ENCODE measurements at regions of chr4 and their contacts with region 1.

Region 1: DNA sequence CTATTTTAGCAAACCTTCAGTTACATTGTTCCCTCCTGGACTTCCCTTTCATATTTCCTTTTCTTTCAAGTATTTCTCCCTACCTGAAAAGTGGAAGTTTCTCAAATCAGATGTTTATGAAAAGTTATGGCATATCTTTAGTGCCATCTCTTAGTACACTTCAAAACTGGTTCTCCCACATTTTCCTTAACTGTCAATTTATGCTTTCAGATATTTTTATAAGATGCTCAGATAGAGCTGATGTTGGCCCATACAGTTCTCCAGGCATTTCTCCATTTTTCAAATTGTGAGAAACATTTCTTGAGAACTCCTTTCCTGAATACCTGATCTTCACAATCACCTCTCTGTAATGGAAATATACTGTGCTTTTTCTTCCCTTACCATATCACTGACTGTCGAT is 32.5 kb upstream of the AP1AR start:
- DNase-seq: no peak
- H3K4me3 Mint-ChIP-seq: no peak overlapping the region
- H3K27ac Mint-ChIP-seq: no peak overlapping the region
- H3K4me1 Mint-ChIP-seq: peaks cover 21% of the 10 kb centered on the region
- H3K27me3 Mint-ChIP-seq: peaks cover 10% of the 10 kb centered on the region

Region 2: GRCh38 chr4:112119353-112119783 is 79.7 kb before region 1 on chr4:
- CTCF ChIA-PET with region 1: interaction called, 5 read pairs
- intact Hi-C with region 1: loop called (anchors 1 kb)
- DNase-seq: peak; percentile 29
- H3K4me3 Mint-ChIP-seq: no peak overlapping the region
- H3K27ac Mint-ChIP-seq: peak overlapping the region; percentile 89
- H3K4me1 Mint-ChIP-seq: peaks cover 22% of the 10 kb centered on the region
- H3K27me3 Mint-ChIP-seq: no peaks in the 10 kb centered on the region

Region 3: DNA sequence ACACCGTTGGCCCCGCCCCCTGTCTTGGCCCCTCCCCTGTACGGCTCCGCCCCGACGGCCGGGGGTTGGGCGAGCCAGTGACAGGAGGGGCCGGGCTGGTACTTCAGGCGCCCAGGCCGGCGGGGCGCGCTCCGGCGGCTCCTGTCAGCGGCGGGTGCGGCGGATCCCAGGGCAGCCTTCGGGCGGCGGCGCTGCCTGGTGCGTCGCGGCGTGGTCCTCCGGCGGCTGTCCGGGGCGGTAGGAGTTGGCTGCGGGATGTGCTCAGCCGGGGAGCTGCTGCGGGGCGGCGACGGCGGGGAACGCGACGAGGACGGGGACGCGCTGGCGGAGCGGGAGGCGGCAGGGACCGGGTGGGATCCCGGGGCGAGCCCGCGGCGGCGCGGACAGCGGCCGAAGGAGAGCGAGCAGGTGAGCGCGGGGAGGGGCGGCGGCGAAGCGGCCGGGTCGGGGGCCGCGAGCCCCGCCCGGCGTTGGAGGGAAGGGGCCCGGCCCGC is 53.7 kb before region 1 on chr4 and contains the start of gene FAM241A:
- CTCF ChIA-PET with region 1: interaction called, 3 read pairs
- intact Hi-C with region 1: loop called (anchors 1 kb)
- DNase-seq: peak; percentile 89
- H3K4me3 Mint-ChIP-seq: peak within 1 kb of the TSS; percentile 91
- H3K27ac Mint-ChIP-seq: peak within 1 kb of the TSS; percentile 93
- H3K4me1 Mint-ChIP-seq: peaks cover 30% of the 10 kb centered on the region
- H3K27me3 Mint-ChIP-seq: no peaks in the 10 kb centered on the region
- total RNA-seq, gene FAM241A: 2.2 to 2.5 TPM

Region 4: GRCh38 chr4:112515304-112516067 is 316.4 kb after region 1 on chr4:
- CTCF ChIA-PET with region 1: no interaction called
- intact Hi-C with region 1: loop called (anchors 1 kb)
- DNase-seq: peak; percentile 66
- H3K4me3 Mint-ChIP-seq: peak overlapping the region; percentile 96
- H3K27ac Mint-ChIP-seq: no peak overlapping the region
- H3K4me1 Mint-ChIP-seq: peaks cover 38% of the 10 kb centered on the region
- H3K27me3 Mint-ChIP-seq: peaks cover 83% of the 10 kb centered on the region